Naive thymus-derived CD4-positive, alpha-beta T cell (primary cell): ENCODE measurements at regions of chr1 and their contacts with region 1.

Region 1: DNA sequence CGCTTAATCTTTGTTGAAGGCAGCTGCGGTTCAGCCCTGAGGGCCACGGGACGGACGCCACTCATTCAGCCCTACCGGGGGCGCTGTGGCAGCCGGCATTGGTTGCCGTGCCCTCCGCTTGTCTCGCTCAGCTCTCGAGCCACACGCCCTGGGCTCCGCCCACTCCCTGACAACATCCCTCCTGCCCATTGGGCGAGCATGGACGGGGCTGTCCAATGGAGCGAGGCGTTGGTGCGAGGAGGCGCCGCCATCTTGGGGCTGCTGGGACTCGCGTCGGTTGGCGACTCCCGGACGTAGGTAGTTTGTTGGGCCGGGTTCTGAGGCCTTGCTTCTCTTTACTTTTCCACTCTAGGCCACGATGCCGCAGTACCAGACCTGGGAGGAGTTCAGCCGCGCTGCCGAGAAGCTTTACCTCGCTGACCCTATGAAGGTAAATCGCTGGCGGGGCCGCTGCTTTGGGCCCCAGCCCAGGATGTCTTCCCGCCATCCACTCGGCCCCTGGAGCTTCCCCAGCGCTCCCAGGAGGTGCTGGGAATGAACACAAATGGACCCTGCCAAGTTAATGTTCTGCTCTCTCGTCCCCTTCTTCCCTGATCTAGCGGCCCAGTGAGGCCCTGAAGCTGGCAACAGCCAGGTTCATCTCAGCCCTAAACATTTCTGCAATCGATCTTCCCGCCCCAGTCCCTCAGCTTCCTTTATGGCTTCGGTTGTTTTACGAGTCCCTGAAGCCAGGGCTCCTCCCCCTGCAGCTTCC is at the start of gene SRP9:
- DNase-seq: peak; percentile 97 to 100 (median 99)
- ATAC-seq: peak; percentile 98
- H3K4me3 ChIP-seq: peak within 1 kb of the TSS; percentile 94
- H3K4me3 Mint-ChIP-seq: no peak within 1 kb of the TSS
- H3K27ac ChIP-seq: peak within 1 kb of the TSS; percentile 97
- H3K27ac Mint-ChIP-seq: no peak within 1 kb of the TSS
- H3K4me1 ChIP-seq: peaks cover 22 to 51% of the 10 kb centered on the region in 2 donors
- H3K4me1 Mint-ChIP-seq: peaks cover 17 to 54% (median 36%) of the 10 kb centered on the region in 7 donors
- H3K27me3 ChIP-seq: no peaks in the 10 kb centered on the region
- H3K27me3 Mint-ChIP-seq: no peaks in the 10 kb centered on the region
- total RNA-seq, gene SRP9: 76.1 to 193 (median 145) TPM

Region 2: GRCh38 chr1:225467193-225468020 is 310.4 kb before region 1 on chr1:
- CTCF ChIA-PET with region 1: interaction called, 4 read pairs
- POLR2A ChIA-PET with region 1: interaction called, 22 read pairs
- intact Hi-C with region 1: loop called (anchors 1 to 2 kb)
- DNase-seq: peak; percentile 57 to 85 (median 81)
- ATAC-seq: peak; percentile 91
- H3K4me3 ChIP-seq: peak overlapping the region; percentile 94
- H3K4me3 Mint-ChIP-seq: peak overlapping the region; percentile 81 to 94 (median 92)
- H3K27ac ChIP-seq: peak overlapping the region; percentile 85
- H3K27ac Mint-ChIP-seq: peak overlapping the region; percentile 89 to 98 (median 98)
- H3K4me1 ChIP-seq: peaks cover 22 to 40% of the 10 kb centered on the region in 2 donors
- H3K4me1 Mint-ChIP-seq: peaks cover 33 to 65% (median 48%) of the 10 kb centered on the region in 7 donors
- H3K27me3 ChIP-seq: no peaks in the 10 kb centered on the region
- H3K27me3 Mint-ChIP-seq: no peaks in the 10 kb centered on the region

Region 3: DNA sequence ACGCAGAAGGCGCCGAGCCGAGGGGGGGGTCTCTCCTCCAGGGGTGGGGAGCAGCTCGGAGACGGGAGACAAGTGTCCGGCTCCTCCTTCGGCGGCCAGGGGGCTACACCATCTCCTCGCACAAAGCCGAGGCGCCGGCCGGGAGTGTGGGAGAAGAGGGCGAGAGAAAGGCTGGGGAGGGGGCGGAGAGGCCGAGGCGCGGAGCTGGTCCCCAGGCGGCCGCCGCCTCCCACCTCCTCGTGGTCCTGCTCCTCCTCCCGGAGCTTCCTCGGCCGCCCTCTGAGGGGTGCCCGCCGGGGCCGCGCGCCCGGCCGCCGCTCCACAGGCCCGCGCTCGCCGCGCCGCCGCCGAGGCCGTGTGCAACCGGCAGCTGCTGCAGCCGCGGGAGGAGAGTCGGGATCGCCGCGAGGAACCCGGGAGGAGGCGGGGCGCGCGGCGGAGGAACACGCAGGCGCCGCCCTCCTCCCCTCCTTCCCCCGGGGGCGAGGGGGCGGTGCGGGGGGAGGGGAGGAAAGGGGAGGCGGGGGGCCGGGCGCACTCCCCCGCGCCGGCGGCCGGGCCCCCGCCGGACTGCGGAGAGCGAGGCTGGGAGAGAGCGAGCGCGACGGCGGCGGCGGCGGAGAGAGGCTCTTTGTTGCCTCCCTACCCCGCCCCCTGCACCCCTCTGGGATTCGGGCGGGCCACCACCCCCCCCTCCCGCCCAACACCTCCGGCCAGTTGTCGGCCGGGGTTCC is 124.9 kb before region 1 on chr1 and contains the start of gene ENAH:
- CTCF ChIA-PET with region 1: interaction called, 3 read pairs
- POLR2A ChIA-PET with region 1: interaction called, 4 read pairs
- intact Hi-C with region 1: loop called in 1 of 2 experiments (anchors 1 kb)
- DNase-seq: peak in 7 of 9 donors; percentile 12 to 49 (median 21)
- ATAC-seq: peak; percentile 72
- H3K4me3 ChIP-seq: peak within 1 kb of the TSS; percentile 58
- H3K4me3 Mint-ChIP-seq: peak within 1 kb of the TSS; percentile 79 to 95 (median 88)
- H3K27ac ChIP-seq: no peak within 1 kb of the TSS
- H3K27ac Mint-ChIP-seq: peak within 1 kb of the TSS in 4 of 9 donors; percentile 16 to 78 (median 70)
- H3K4me1 ChIP-seq: peaks cover 5 to 12% of the 10 kb centered on the region in 2 donors
- H3K4me1 Mint-ChIP-seq: peaks cover 9 to 19% (median 16%) of the 10 kb centered on the region in 7 donors
- H3K27me3 ChIP-seq: peaks cover 0 to 12% of the 10 kb centered on the region in 2 donors
- H3K27me3 Mint-ChIP-seq: peaks cover 30 to 71% (median 40%) of the 10 kb centered on the region in 5 donors
- total RNA-seq, gene ENAH: 0.08 to 0.42 (median 0.16) TPM in 3 of 5 experiments, not detected in the others

Region 4: DNA sequence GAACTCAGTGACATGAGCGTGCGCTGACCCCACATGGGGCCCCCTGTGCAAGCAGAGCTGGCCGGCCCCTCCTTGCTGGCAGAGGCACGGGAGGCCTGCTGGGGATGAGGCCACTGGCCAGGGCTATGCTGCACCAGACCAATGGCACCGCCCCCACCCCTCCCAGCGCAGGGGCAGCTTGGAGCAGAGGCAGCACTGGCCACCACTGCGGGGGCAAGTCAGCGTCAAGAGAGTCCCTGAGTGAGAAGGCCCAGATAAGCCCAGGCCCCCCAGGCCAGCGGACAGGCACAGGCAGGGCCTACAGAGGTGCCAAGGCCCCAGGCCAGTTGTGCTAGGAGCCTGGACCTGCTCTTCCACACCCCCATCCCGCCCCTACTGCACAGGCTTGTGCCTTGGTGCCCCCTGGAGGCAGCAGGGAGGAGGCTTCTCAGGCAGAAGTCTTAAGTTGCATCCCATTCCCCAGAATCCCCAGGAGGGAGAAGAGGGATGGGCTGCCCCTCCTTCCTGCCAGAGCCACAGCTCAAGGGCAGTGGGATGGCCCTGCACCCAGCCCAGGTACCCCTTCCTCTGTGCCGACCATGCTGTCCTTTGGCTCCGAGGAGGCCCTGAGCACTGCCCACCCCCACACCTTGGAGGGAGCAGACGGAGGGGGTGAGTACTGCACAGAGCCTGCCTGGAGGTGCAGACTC is 68.0 kb after region 1 on chr1:
- CTCF ChIA-PET with region 1: interaction called, 7 read pairs
- POLR2A ChIA-PET with region 1: interaction called, 21 read pairs
- intact Hi-C with region 1: loop called (anchors 5 kb)
- DNase-seq: peak in 4 of 9 donors; percentile 35 to 55 (median 46)
- ATAC-seq: peak; percentile 36
- H3K4me3 ChIP-seq: no peak overlapping the region
- H3K4me3 Mint-ChIP-seq: no peak overlapping the region
- H3K27ac ChIP-seq: no peak overlapping the region
- H3K27ac Mint-ChIP-seq: peak overlapping the region in 6 of 9 donors; percentile 12 to 98 (median 36)
- H3K4me1 ChIP-seq: peaks cover 37 to 38% of the 10 kb centered on the region in 2 donors
- H3K4me1 Mint-ChIP-seq: peaks cover 19 to 50% (median 43%) of the 10 kb centered on the region in 7 donors
- H3K27me3 ChIP-seq: no peaks in the 10 kb centered on the region
- H3K27me3 Mint-ChIP-seq: no peaks in the 10 kb centered on the region

Region 5: GRCh38 chr1:225896937-225897549 is 119.3 kb after region 1 on chr1:
- CTCF ChIA-PET with region 1: no interaction called
- POLR2A ChIA-PET with region 1: interaction called, 33 read pairs
- intact Hi-C with region 1: loop called (anchors 1 kb)
- DNase-seq: peak in 8 of 9 donors; percentile 70 to 92 (median 88)
- ATAC-seq: peak; percentile 97
- H3K4me3 ChIP-seq: peak overlapping the region; percentile 50
- H3K4me3 Mint-ChIP-seq: peak overlapping the region; percentile 74 to 89 (median 84)
- H3K27ac ChIP-seq: peak overlapping the region; percentile 85
- H3K27ac Mint-ChIP-seq: peak overlapping the region; percentile 89 to 100 (median 97)
- H3K4me1 ChIP-seq: peaks cover 35 to 45% of the 10 kb centered on the region in 2 donors
- H3K4me1 Mint-ChIP-seq: peaks cover 36 to 67% (median 54%) of the 10 kb centered on the region in 7 donors
- H3K27me3 ChIP-seq: no peaks in the 10 kb centered on the region
- H3K27me3 Mint-ChIP-seq: peaks cover 0 to 47% (median 0%) of the 10 kb centered on the region in 5 donors

Region 6: DNA sequence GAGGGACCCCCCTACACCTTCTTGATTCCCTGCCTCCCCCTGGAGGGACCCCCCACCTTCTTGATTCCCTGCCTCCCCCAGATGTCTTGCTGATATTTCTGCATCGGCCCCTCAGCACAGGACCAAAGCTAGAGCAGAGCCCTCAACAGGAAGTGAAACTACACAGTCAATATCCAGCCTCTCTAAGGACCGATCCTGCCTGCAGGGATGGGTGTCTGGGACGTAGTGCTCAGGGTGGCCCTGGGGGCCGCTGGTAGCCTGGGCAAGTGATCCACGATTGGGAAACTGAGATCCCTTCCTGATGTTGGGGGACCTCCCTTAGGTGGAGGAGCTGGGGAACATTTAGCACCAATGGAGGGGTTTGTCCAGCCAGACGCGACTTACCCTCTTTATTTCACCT is 167.2 kb after region 1 on chr1:
- CTCF ChIA-PET with region 1: no interaction called
- POLR2A ChIA-PET with region 1: no interaction called
- intact Hi-C with region 1: no loop called
- DNase-seq: no peak
- ATAC-seq: peak; percentile 79
- H3K4me3 ChIP-seq: peak overlapping the region; percentile 6
- H3K4me3 Mint-ChIP-seq: peak overlapping the region; percentile 21 to 84 (median 62)
- H3K27ac ChIP-seq: no peak overlapping the region
- H3K27ac Mint-ChIP-seq: peak overlapping the region in 7 of 9 donors; percentile 22 to 95 (median 53)
- H3K4me1 ChIP-seq: peaks cover 7 to 11% of the 10 kb centered on the region in 2 donors
- H3K4me1 Mint-ChIP-seq: peaks cover 11 to 26% (median 17%) of the 10 kb centered on the region in 7 donors
- H3K27me3 ChIP-seq: no peaks in the 10 kb centered on the region
- H3K27me3 Mint-ChIP-seq: peaks cover 0 to 18% (median 5%) of the 10 kb centered on the region in 5 donors

Region 7: DNA sequence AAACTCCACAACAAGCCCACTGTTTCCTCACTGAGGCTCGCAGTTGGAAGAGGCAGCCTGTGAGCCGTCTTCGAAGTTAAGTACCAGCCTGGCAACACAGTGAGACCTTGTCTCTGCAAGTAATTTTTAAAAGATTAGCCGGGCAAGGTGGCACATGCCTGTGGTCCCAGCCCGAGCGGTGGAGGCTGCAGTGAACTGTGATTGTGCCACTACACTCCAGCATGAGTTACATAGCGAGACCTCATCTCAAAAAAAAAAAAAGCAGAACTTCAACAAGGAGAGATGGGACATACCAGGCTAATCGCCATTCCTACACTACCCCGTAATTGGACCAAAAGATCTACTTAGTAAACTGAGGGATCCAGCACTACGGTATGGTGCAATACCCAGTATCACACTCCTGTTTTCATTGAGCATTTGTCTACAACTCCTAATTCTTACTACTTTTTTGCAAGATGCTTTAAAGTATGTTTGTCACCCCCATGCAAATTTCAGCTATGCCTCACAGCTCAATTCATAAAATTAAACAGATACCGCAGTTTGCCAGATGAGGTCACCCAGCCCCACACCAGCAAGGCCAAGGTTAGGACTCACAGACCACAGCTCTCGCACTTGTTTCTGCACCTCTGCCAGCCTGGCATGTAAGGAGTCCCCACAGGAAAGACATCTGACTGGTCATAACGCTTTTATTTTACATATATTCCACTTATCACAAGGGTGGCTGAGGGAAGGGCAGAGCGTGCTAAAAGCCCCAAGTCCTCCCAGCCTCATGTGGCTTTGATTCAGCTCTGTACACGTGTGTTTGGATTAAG is 200.4 kb after region 1 on chr1:
- CTCF ChIA-PET with region 1: no interaction called
- POLR2A ChIA-PET with region 1: interaction called, 6 read pairs
- intact Hi-C with region 1: loop called (anchors 1 to 2 kb)
- DNase-seq: no peak
- ATAC-seq: peak; percentile 30
- H3K4me3 ChIP-seq: no peak overlapping the region
- H3K4me3 Mint-ChIP-seq: no peak overlapping the region
- H3K27ac ChIP-seq: no peak overlapping the region
- H3K27ac Mint-ChIP-seq: peak overlapping the region in 1 of 9 donors; percentile 20
- H3K4me1 ChIP-seq: no peaks in the 10 kb centered on the region
- H3K4me1 Mint-ChIP-seq: peaks cover 0 to 9% (median 6%) of the 10 kb centered on the region in 7 donors
- H3K27me3 ChIP-seq: no peaks in the 10 kb centered on the region
- H3K27me3 Mint-ChIP-seq: no peaks in the 10 kb centered on the region